Activated T-helper 1 cell treated with anti-CD3 and anti-CD28 coated beads, Interleukin-12 subunit alpha, Interleukin-12 subunit beta, Interleukin-2, Interleukin-4 antibody, amounts not matched to agents 30 ng/mL and 10 ng/mL and 1 ng/mL, durations not matched to agents 14 hours and 24 hours and 36 hours (primary cell): ENCODE measurements at regions of chr16 and their contacts with region 1.

Region 1: GRCh38 chr16:11224096-11224893 is 31.7 kb downstream of the SOCS1 start:
- DNase-seq: peak; percentile 66
- H3K4me3 Mint-ChIP-seq: peak overlapping the region; percentile 80
- H3K27ac Mint-ChIP-seq: peak overlapping the region; percentile 98
- H3K4me1 Mint-ChIP-seq: peaks cover 58% of the 10 kb centered on the region
- H3K27me3 Mint-ChIP-seq: no peaks in the 10 kb centered on the region

Region 2: DNA sequence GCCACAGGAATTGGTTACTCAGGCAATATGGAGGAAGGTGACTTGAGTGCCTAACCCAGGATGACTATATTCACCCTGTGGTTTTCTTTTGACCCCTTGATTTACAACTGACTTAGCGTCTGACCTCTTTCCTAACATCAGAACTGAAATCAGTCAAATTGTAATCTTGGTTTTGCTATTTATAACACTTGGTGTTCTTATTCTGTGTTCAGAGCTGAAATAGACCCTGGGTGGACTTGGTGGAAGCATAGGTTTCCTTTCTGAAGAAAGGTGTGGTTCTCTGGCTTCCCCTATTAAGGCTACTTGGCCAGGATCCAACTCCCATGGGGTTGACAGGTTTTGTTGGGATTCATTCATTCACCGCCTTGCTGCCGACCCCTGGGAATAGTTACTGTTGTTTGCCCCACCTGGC is 199.2 kb before region 1 on chr16:
- intact Hi-C with region 1: loop called (anchors 1 kb)
- DNase-seq: no peak
- H3K4me3 Mint-ChIP-seq: no peak overlapping the region
- H3K27ac Mint-ChIP-seq: peak overlapping the region; percentile 82
- H3K4me1 Mint-ChIP-seq: peaks cover 31% of the 10 kb centered on the region
- H3K27me3 Mint-ChIP-seq: no peaks in the 10 kb centered on the region

Region 3: DNA sequence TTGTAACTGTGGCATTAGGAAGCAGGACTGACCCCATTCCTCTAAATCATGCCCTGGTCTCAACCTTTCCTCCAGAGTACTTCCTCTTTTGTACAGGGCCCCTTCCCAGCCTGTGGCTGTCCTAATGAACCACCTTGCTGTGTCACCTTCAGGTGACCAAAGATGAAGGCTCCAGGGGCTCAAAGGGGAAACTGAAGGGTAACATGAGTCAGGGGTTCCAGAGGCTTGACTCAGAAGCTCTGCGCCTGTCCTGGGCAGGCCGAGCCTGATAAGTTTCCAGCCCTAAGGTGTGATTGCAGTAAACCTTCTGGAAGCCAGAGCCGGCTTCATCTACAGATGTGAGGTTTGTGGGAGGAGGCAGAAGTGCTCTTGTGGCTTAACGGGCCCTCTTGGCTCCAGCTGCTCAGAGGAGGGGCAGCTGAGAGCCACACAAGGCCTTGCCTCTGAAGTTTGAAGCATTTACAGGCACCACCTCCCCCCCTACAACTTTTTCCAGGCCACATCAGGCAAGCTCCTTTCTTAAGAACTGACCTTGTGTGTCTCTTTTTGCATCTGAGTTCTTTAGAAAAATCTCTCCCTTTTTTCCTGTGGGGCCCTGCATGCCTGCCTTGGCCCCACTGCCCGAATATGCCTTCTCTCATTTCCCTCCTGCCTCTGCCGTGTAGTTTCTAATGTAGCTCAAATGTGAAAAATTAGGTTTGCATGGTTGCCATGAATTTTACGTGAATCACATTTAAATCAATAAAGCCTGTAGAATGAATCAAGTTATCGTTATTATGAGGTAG is 130.0 kb before region 1 on chr16:
- intact Hi-C with region 1: loop called (anchors 1 kb)
- DNase-seq: peak; percentile 56
- H3K4me3 Mint-ChIP-seq: peak overlapping the region; percentile 68
- H3K27ac Mint-ChIP-seq: peak overlapping the region; percentile 100
- H3K4me1 Mint-ChIP-seq: peaks cover 70% of the 10 kb centered on the region
- H3K27me3 Mint-ChIP-seq: no peaks in the 10 kb centered on the region

Region 4: GRCh38 chr16:11205754-11206581 is 18.3 kb before region 1 on chr16:
- intact Hi-C with region 1: loop called (anchors 2 kb)
- DNase-seq: no peak
- H3K4me3 Mint-ChIP-seq: peak overlapping the region; percentile 31
- H3K27ac Mint-ChIP-seq: peak overlapping the region; percentile 92
- H3K4me1 Mint-ChIP-seq: peaks cover 63% of the 10 kb centered on the region
- H3K27me3 Mint-ChIP-seq: no peaks in the 10 kb centered on the region

Region 5: GRCh38 chr16:11240636-11241473 is 16.6 kb after region 1 on chr16:
- intact Hi-C with region 1: no loop called
- DNase-seq: no peak
- H3K4me3 Mint-ChIP-seq: peak overlapping the region; percentile 2
- H3K27ac Mint-ChIP-seq: peak overlapping the region; percentile 70
- H3K4me1 Mint-ChIP-seq: peaks cover 37% of the 10 kb centered on the region
- H3K27me3 Mint-ChIP-seq: no peaks in the 10 kb centered on the region

Region 6: DNA sequence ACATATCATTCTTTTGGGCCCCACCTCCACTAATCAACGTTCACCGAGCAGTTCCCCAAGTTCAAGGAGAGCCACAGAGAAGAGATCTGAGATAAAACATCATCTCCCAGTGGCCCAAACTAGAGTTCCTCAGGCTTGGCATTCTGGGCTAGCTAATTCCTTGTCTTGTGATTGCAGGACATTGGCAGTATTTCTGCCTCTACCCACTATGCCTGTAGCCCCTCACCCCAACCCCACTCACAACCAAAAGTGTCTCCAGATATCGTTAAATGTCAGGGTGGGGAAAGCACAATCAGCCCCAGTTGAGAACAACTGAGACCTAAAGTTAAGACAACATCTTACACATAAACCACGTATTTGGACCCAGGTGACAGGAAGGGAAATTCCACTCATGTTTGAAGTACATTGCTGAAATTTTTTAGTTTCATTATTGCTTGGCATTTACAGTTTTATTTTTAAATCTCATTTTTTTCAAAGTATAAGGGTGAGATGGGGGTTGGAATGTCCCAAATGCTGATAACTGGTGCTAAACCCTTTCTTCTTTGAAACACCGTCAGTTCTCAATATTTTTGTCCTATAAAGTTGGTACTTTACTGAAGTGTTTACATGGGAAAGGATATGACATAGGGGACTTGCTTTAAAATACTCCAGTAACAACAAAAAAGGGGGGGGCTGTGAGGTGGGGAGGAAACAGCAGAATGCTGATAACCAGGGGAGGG is 559.2 kb after region 1 on chr16:
- intact Hi-C with region 1: loop called (anchors 1 kb)
- DNase-seq: peak; percentile 67
- H3K4me3 Mint-ChIP-seq: peak overlapping the region; percentile 83
- H3K27ac Mint-ChIP-seq: peak overlapping the region; percentile 98
- H3K4me1 Mint-ChIP-seq: peaks cover 64% of the 10 kb centered on the region
- H3K27me3 Mint-ChIP-seq: no peaks in the 10 kb centered on the region